ENCODE measurements at regions of chr12 and their contacts with region 1.

Region 1: GRCh38 chr12:949453-950191 is at the start of gene RAD52:
- DNase-seq: peak; percentile 98
- ATAC-seq: peak; percentile 97 to 98 (median 97)
- H3K4me3 ChIP-seq: peak within 1 kb of the TSS; percentile 54 to 96 (median 78)
- H3K27ac ChIP-seq: peak within 1 kb of the TSS; percentile 65 to 96 (median 92)
- H3K4me1 ChIP-seq: peaks cover 0 to 38% (median 11%) of the 10 kb centered on the region in 9 donors
- H3K27me3 ChIP-seq: no peaks in the 10 kb centered on the region
- CTCF ChIP-seq: peak; percentile 96 to 100 (median 98)
- total RNA-seq, gene RAD52: 4.8 to 9.6 (median 6.1) TPM

Region 2: DNA sequence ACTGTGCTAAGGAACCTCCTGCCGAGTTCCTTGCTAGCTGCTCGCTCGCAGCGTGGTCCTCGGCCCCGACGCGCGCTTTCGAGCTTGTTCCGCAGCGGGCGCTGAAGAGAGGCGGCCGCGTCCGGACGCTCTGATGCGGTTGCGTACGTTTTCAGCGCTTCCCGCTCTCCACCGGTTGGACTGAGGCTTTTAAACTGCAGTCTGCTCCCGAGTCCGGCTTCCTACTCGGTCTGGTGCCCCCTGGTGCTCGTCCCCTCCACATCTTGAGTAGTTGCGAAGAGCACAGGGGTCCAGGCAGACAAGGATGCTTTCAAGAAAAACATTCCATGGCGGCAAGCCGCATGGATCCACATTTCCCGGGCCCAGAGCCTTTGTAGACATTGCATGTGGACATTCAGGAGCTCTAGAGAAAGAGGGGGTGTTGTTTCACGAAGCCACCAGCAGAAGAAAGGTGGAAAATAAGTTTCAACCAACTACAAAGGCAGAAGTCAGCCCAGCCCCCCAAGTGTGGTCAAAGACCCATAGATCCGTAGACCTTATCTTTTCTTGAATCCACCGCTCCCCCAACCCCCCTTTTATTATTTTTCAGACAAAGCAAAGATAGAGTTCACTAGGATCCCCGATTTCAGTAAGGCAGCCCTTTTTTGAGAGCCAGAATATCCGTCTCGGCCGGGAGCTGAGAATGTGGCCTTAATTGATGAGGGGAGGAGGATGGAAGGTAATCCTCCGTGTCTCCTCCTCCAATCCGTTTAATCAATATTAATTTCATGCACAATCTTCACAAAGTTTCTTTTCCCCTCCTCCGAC is 198.2 kb before region 1 on chr12:
- intact Hi-C with region 1: loop called in 3 of 10 experiments (anchors 5 to 10 kb)
- DNase-seq: peak; percentile 92 to 94
- ATAC-seq: peak; percentile 55 to 86 (median 72)
- H3K4me3 ChIP-seq: peak overlapping the region; percentile 0 to 94 (median 86)
- H3K27ac ChIP-seq: peak overlapping the region; percentile 81 to 99 (median 98)
- H3K4me1 ChIP-seq: peaks cover 0 to 36% (median 27%) of the 10 kb centered on the region in 9 donors
- H3K27me3 ChIP-seq: no peaks in the 10 kb centered on the region
- CTCF ChIP-seq: peak; percentile 67 to 91 (median 79)

Region 3: GRCh38 chr12:884746-885414 is 64.7 kb before region 1 on chr12:
- intact Hi-C with region 1: no loop called
- DNase-seq: no peak
- ATAC-seq: peak in 1 of 8 donors; percentile 40
- H3K4me3 ChIP-seq: no peak overlapping the region
- H3K27ac ChIP-seq: no peak overlapping the region
- H3K4me1 ChIP-seq: no peaks in the 10 kb centered on the region
- H3K27me3 ChIP-seq: no peaks in the 10 kb centered on the region
- CTCF ChIP-seq: no peak

Region 4: DNA sequence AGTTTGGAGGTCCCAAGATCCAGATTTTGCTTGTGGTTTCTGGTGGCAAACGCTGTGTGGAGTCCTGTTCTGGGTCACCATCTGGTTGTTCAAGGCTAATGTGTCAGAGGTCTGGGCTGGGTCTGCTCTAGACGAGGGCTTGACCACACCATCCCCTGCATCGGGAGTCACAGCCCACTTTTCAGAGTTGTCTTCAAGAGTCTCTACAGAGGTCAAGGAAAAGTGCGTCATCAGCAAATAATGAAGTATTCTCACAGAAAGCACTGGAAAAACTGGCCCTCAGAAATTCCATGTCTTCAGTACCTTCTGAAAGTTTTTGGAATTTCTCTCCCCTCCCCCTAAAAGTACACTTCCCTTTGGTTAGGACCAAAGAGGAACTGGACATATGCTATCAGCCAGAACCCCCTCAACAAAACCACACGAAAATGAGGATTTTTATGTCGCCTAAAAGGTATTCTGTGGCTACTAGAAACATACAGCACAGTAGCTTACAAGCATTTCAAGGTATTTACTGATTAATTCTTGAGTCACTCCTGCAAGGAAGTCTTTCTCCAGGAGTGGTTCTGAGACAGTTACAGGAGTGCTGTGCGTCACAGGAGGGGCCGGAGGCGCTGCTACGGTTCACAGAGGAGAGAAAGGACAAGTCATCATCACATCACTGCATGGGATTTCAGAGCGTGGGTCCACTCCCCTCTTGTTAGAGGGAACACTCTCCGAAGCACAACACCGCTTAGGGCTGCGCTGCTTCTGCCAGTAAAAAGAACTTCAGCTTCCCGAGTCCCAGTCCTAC is 35.5 kb before region 1 on chr12:
- intact Hi-C with region 1: loop called in 1 of 10 experiments (anchors 5 kb)
- DNase-seq: no peak
- ATAC-seq: no peak
- H3K4me3 ChIP-seq: no peak overlapping the region
- H3K27ac ChIP-seq: peak overlapping the region in 3 of 10 donors; percentile 23 to 36 (median 25)
- H3K4me1 ChIP-seq: peaks cover 3 to 62% (median 39%) of the 10 kb centered on the region in 9 donors
- H3K27me3 ChIP-seq: no peaks in the 10 kb centered on the region
- CTCF ChIP-seq: no peak

Region 5: DNA sequence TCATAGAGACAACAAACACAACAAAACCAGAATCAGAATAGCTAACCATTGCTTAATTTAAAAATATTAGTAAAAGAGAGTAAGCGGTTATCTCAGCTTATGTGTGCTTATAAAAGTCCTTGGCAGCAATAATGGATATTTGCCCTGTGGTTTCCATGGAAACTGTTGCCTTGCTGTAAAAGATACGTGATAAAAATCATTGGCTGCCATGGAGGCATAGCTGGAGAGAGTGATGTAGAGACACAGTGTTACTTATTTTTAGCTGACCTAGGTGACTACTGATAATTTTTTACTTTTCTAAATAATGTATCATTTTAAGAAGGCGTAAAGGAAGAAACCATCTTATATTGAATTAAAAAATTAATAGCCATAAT is 134.3 kb after region 1 on chr12:
- intact Hi-C with region 1: loop called in 1 of 10 experiments (anchors 5 kb)
- DNase-seq: no peak
- ATAC-seq: peak in 3 of 8 donors; percentile 42 to 62 (median 50)
- H3K4me3 ChIP-seq: peak overlapping the region in 2 of 10 donors; percentile 0 to 23
- H3K27ac ChIP-seq: peak overlapping the region in 6 of 10 donors; percentile 4 to 50 (median 22)
- H3K4me1 ChIP-seq: peaks cover 0 to 15% (median 3%) of the 10 kb centered on the region in 9 donors
- H3K27me3 ChIP-seq: no peaks in the 10 kb centered on the region
- CTCF ChIP-seq: no peak

Region 6: DNA sequence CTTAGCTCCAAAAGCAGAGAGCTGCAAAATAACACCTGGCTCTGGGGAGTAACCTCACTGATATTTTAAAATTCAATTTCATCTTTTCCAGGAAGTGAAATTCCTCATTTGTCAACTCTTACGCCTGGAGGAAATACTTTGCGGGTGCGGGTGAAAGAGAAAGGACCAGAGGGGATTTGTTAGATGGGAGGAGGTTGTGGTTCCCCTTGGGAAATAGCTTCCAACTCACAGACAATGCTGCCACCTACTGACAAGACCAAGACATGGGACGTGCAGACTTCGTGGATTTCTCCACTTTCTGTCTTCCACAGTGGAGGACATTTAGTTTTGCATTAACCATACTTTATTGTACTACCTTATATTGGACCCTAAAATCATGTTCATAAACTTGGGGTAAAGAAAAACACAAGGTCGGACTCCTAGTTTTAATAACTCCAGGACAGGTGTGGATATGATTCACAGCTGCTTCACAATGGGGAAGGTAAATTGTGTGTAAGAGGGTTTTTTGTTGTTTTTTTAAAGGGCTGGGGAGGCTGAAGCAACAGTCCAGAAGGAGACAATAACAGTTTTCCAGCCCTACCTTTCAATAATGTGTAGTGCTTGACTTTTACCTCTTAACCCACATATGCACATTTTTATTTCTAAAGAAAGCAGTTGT is 633.9 kb after region 1 on chr12:
- intact Hi-C with region 1: loop called in 2 of 10 experiments (anchors 5 to 10 kb)
- DNase-seq: peak in 1 of 2 donors; percentile 80
- ATAC-seq: peak; percentile 54 to 87 (median 84)
- H3K4me3 ChIP-seq: peak overlapping the region in 6 of 10 donors; percentile 11 to 36 (median 19)
- H3K27ac ChIP-seq: no peak overlapping the region
- H3K4me1 ChIP-seq: peaks cover 6 to 41% (median 26%) of the 10 kb centered on the region in 9 donors
- H3K27me3 ChIP-seq: no peaks in the 10 kb centered on the region
- CTCF ChIP-seq: peak; percentile 53 to 94 (median 90)

Measured in heart right ventricle (tissue), 16 donors.